ENCODE measurements at regions of chr15 and their contacts with region 1.

Region 1: GRCh38 chr15:52780172-52780980 is 9.8 kb downstream of the ONECUT1 start:
- DNase-seq: peak; percentile 91
- H3K4me3 Mint-ChIP-seq: peak overlapping the region; percentile 24
- H3K27ac Mint-ChIP-seq: no peak overlapping the region
- H3K4me1 Mint-ChIP-seq: peaks cover 10% of the 10 kb centered on the region
- H3K27me3 Mint-ChIP-seq: peaks cover 72% of the 10 kb centered on the region

Region 2: DNA sequence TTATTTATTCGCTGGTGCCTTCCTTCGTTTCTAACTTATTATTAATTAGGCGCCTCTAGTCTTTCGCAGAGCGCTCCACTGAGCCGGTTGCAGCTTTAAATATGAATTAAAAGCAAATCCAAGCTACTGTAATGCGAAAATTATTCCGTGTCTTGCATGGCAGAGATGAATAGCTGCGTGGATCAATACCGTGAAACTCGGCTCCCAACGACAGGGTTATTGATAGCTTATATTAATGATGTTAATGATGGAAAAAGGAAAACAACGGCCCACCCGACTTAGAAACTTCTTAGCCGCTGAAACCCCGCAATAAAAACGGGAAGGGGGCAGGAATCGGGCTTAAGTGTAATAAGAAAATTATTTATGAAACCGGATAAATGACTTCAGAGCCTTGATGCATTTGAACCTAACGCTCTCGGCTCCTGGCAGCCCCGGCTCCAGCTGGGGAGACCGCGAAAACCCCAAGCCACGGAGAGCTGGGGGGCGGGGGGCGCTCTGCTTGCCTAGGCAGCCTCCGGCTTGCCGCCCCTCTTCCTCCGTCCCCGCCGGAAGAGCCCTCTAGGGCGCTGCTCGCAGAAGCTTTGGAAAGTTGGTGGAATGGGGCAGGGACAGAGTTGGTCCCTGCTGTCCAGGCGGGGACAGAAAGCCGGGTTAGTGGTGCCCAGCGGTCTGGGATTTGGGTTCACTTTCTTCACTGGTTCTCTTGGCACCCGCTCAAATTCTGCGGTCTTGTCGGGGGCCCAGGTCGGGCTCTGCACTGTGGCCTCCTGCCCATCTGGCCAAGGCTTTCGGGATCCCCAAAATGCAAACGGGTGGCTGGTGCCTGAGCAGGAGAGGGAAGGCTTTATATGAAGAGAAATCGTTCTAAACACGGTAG is 17.5 kb after region 1 on chr15:
- intact Hi-C with region 1: loop called (anchors 2 kb)
- DNase-seq: peak; percentile 56
- H3K4me3 Mint-ChIP-seq: no peak overlapping the region
- H3K27ac Mint-ChIP-seq: peak overlapping the region; percentile 58
- H3K4me1 Mint-ChIP-seq: peaks cover 9% of the 10 kb centered on the region
- H3K27me3 Mint-ChIP-seq: peaks cover 91% of the 10 kb centered on the region

Region 3: GRCh38 chr15:53197426-53197839 is 417.1 kb after region 1 on chr15:
- intact Hi-C with region 1: loop called (anchors 2 kb)
- DNase-seq: peak; percentile 82
- H3K4me3 Mint-ChIP-seq: peak overlapping the region; percentile 56
- H3K27ac Mint-ChIP-seq: no peak overlapping the region
- H3K4me1 Mint-ChIP-seq: peaks cover 3% of the 10 kb centered on the region
- H3K27me3 Mint-ChIP-seq: peaks cover 7% of the 10 kb centered on the region